ENCODE measurements at regions of chr7 and their contacts with region 1.

Region 1: DNA sequence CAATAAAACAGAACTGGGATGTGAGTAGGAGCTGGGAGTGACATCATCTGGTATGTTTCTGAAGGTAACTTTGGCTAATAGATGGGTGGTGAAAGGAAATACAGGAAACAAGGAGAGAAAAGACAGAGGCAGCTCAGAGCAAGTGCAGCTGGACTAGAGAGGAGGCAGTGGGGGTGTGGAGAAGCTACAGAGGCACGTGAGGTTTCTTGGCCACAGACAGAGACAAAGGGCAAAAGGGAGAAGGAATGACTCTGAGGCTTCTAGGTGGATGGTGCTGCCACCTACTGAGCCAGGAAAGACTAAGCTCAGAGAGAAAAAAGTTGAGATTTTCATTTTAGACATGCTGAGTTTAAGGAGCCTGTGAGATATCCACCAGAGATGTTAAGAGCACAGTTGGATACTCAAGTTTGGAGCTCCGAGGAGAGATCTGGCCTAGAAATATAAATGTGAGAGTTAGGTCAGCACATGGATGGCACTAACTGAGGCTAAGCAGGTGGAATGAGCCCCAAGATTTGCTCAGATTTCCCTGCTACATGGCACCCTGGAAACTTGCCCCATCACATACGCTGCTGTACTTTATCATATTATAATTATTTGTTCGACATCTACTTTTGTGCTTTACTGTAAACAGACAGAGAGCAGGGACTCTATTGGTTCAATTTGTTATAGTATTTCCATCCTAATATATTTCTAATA is 293.0 kb upstream of the IMMP2L start:
- DNase-seq: peak; percentile 56

Region 2: DNA sequence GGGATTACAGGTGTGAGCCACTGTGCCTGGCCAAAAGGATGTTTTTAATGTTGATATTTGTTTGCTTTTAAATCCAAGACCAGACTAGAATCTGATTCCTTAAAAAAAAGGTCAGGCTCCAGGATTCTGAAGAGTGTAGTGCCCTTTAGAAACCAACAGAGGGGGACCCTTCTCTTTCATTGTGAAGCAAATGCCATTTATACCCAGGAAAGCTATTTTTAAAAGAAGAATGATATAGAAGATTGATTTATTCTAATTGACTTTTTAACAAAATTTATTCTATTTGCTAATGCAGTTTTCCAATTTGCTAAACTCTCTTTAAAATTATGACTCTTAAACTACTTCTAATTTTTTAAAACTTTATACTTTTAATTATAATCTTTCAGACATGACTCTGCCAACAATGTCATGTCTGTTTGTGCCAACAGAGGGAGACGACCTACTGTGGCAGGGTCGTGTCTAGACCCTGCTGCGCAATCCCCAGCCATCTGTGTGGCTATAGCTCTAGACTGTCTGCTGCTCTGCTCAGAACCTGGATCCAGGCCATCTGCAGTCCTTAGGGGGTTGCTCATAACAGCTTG is 92.0 kb before region 1 on chr7:
- CTCF ChIA-PET with region 1: interaction called, 10 read pairs
- POLR2A ChIA-PET with region 1: no interaction called
- DNase-seq: peak; percentile 43

Measured in HEK293T (cell line).